ENCODE measurements at regions of chr6 and their contacts with region 1.

Region 1: GRCh38 chr6:126199466-126199865 is 140.4 kb upstream of the CENPW start:
- DNase-seq: no peak
- H3K4me3 ChIP-seq: no peak overlapping the region
- H3K27ac ChIP-seq: no peak overlapping the region
- H3K4me1 ChIP-seq: no peaks in the 10 kb centered on the region
- CTCF ChIP-seq: no peak

Region 2: DNA sequence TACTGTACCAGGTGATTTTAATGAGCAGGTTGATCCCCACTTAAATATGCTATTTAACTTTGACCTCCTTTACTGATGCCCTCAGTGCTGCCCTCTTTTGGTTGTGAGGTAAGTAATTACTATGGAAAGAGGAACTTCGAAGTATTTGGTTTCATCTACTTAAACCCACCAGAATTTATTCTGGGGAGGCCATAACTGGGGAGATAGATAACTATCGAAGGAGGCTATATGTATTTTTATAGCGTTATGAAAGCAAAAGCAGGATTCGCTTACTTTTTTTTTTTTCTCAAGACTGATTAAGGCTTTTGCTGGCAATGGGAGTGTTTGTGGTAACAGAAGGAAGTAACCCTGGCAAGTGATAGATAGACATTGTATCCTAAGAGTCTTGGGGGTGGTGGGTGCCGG is 28.5 kb before region 1 on chr6:
- CTCF ChIA-PET with region 1: no interaction called
- POLR2A ChIA-PET with region 1: no interaction called
- intact Hi-C with region 1: loop called (anchors 1 kb)
- DNase-seq: peak; percentile 61
- H3K4me3 ChIP-seq: no peak overlapping the region
- H3K27ac ChIP-seq: no peak overlapping the region
- H3K4me1 ChIP-seq: no peaks in the 10 kb centered on the region
- CTCF ChIP-seq: peak; percentile 88

Region 3: GRCh38 chr6:126217497-126217896 is 18.0 kb after region 1 on chr6:
- CTCF ChIA-PET with region 1: no interaction called
- POLR2A ChIA-PET with region 1: no interaction called
- intact Hi-C with region 1: no loop called
- DNase-seq: no peak
- H3K4me3 ChIP-seq: no peak overlapping the region
- H3K27ac ChIP-seq: no peak overlapping the region
- H3K4me1 ChIP-seq: no peaks in the 10 kb centered on the region
- CTCF ChIP-seq: no peak

Region 4: GRCh38 chr6:126339796-126340609 is 140.5 kb after region 1 on chr6 and contains the start of gene CENPW:
- CTCF ChIA-PET with region 1: no interaction called
- POLR2A ChIA-PET with region 1: no interaction called
- intact Hi-C with region 1: no loop called
- DNase-seq: peak; percentile 95
- H3K4me3 ChIP-seq: peak within 1 kb of the TSS; percentile 87
- H3K27ac ChIP-seq: peak within 1 kb of the TSS; percentile 87
- H3K4me1 ChIP-seq: peaks cover 20% of the 10 kb centered on the region
- CTCF ChIP-seq: peak; percentile 41
- total RNA-seq, gene CENPW: 22.1 and 28.6 TPM in 2 replicates